Endothelial cell of umbilical vein (primary cell): ENCODE measurements at regions of chr1 and their contacts with region 1.

Region 1: GRCh38 chr1:44571712-44572571 is 102.3 kb downstream of the TMEM53 start:
- DNase-seq: peak; percentile 8
- H3K4me3 ChIP-seq: no peak overlapping the region
- H3K27ac ChIP-seq: no peak overlapping the region
- H3K4me1 ChIP-seq: no peaks in the 10 kb centered on the region
- H3K27me3 ChIP-seq: peaks cover 9 to 10% of the 10 kb centered on the region in 2 experiments
- CTCF ChIP-seq: peak; percentile 35 to 41
- POLR2A ChIP-seq: no peak

Region 2: DNA sequence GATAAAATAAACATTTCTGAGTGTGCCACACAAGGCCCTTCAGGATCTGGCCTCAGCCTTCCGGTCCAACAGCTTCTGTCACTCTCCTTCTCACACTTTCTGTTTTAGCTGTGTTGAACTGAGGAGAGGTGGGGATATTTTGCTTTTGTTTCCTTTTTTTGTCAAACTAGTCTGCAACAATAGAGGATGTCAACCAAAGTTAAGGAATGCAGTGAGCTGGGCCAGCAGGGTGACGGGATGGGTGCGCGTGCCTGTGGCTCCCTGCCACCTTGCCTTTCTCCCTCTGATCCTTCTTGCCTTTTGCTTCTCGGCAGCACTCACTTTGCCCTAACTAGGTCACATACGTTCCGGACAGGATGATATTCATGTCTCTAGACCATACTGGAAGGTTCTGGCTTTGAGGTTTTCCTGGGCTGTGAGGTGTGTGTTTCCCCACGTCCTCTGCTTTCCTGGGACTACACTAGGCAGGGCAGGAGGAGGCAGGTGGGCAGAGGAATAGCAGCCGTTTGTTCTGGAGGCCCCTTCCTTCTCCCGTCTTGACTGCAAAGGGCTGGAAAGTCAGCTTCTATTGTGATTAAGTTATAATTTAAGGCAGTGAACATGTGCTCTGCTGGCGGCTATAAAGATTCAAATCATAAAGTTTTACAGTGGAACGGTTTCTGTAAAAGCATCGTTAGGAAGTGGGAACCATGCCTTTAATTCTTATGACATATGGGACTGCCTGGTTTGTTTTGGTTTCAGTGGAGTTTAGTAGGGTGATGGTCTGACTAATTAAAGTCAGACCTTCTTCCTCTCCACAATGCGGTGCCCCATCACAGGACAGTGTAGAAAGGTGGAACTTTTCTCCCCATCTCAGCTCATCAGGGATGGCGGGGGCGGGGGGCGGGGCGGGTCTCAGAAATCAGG is 99.1 kb before region 1 on chr1:
- CTCF ChIA-PET with region 1: no interaction called
- POLR2A ChIA-PET with region 1: no interaction called
- dilution Hi-C with region 1: no loop called
- intact Hi-C with region 1: no loop called
- DNase-seq: peak; percentile 9
- H3K4me3 ChIP-seq: no peak overlapping the region
- H3K27ac ChIP-seq: no peak overlapping the region
- H3K4me1 ChIP-seq: no peaks in the 10 kb centered on the region
- H3K27me3 ChIP-seq: peaks cover 2 to 11% of the 10 kb centered on the region in 2 experiments
- CTCF ChIP-seq: no peak
- POLR2A ChIP-seq: no peak

Region 3: DNA sequence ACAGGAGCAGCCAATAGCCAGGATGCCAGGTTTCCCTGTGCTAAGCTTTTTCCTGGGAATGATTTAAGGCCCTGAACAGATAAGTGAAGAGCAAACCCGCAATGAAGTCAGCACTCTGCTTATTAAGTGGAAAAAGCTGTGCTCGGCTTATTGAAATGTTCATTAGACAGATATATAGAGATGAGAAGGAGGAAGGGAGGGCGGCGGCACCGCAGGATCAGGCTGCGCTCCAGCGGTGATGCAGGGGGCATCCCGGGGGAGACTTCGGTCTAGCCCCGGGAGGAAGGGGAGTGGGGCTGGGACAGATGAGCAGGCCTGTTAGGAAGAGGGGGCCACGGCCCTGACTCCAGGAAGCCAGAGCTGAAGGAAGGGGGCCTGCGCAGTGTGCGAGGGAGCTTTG is 12.6 kb before region 1 on chr1:
- CTCF ChIA-PET with region 1: interaction called, 41 read pairs
- POLR2A ChIA-PET with region 1: no interaction called
- dilution Hi-C with region 1: no loop called
- intact Hi-C with region 1: no loop called
- DNase-seq: no peak
- H3K4me3 ChIP-seq: no peak overlapping the region
- H3K27ac ChIP-seq: no peak overlapping the region
- H3K4me1 ChIP-seq: no peaks in the 10 kb centered on the region
- H3K27me3 ChIP-seq: peaks cover 6 to 15% of the 10 kb centered on the region in 2 experiments
- CTCF ChIP-seq: no peak
- POLR2A ChIP-seq: no peak

Region 4: DNA sequence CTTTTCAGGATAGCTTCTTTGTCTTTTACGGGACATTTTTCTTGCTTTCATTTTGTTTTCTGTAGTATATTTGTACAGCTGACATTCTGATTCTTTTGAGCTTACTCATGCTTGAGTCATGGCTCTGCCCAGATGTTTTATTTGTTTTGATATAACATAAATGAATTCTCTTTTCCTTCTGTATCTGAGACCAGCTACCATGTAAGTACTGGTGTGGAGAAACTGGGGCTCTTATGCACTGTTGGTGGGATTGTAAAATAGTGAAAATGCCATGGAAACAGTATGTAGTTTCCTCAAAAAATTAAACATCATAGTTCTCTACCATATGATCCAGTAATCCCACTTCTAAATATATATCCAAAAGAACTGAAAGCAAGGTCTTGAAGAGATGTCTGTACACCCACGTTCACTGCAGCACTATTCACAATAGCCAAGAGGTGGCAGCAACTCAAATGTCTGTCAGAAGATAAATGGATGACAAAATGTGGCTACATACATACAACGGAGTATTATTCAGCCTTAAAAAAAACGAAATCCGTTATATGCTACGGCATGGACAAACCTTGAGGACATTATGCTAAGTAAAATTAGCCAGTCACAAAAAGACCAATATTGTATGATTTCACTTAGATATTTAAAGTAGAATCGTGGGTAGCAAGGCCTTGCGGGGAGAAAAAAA is 353.0 kb after region 1 on chr1:
- CTCF ChIA-PET with region 1: no interaction called
- POLR2A ChIA-PET with region 1: no interaction called
- dilution Hi-C with region 1: no loop called
- intact Hi-C with region 1: no loop called
- DNase-seq: peak; percentile 93
- H3K4me3 ChIP-seq: peak overlapping the region in 2 of 3 experiments; percentile 11 to 61
- H3K27ac ChIP-seq: peak overlapping the region; percentile 87
- H3K4me1 ChIP-seq: peaks cover 18% of the 10 kb centered on the region
- H3K27me3 ChIP-seq: no peaks in the 10 kb centered on the region
- CTCF ChIP-seq: peak; percentile 32 to 54
- POLR2A ChIP-seq: no peak

Region 5: DNA sequence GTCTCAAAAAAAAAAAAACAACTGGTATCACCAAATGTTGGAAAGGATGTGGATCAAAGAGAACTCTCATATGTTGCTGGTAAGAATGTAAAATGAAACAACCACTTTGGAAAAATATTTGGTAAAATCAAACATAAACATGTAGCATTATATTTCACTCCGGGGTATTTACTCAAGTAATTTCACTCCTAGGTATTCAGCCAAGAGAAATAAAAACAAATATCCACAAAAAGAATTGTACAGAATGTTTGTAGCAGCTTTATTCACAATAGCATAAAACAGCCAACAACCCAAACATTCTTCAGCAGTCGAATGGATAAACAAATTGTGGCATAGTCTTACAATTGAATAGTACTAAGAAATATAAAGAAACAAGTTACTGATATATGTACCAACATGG is 666.9 kb after region 1 on chr1:
- CTCF ChIA-PET with region 1: no interaction called
- POLR2A ChIA-PET with region 1: no interaction called
- dilution Hi-C with region 1: no loop called
- intact Hi-C with region 1: no loop called
- DNase-seq: no peak
- H3K4me3 ChIP-seq: no peak overlapping the region
- H3K27ac ChIP-seq: no peak overlapping the region
- H3K4me1 ChIP-seq: no peaks in the 10 kb centered on the region
- H3K27me3 ChIP-seq: no peaks in the 10 kb centered on the region
- CTCF ChIP-seq: no peak
- POLR2A ChIP-seq: no peak